ENCODE measurements at regions of chr22 and their contacts with region 1.

Region 1: DNA sequence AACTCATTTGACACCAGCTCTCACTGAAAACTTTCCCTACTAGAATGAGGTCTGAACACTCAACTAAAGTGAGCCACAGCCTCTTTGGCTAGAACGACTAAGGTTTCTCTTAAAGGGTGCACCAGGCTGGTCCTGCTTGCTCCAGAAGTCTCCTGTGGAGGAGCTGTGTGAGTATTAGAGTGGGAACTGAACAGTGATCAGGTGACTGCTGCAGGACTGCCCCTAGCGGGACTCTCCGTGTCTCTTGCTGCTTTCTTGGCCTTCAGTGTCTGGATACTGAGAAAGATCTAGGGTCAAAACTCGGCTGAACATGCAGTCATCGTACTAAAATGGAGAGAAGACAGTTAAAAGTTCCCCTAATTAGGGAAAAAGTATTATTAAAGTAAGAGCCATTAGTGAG is 34.6 kb downstream of the FAM118A start:
- DNase-seq: no peak
- ATAC-seq: peak; percentile 58 to 64

Region 2: GRCh38 chr22:45413368-45414211 is 69.3 kb after region 1 on chr22 and contains the starts of genes RIBC2 and SMC1B:
- intact Hi-C with region 1: loop called in 1 of 2 experiments (anchors 10 kb)
- DNase-seq: peak; percentile 85
- ATAC-seq: peak; percentile 94
- total RNA-seq, gene RIBC2: 0.39 to 0.47 TPM
- total RNA-seq, gene SMC1B: not detected